Heart left ventricle (tissue), 16 donors: ENCODE measurements at regions of chr10 and their contacts with region 1.

Region 1: DNA sequence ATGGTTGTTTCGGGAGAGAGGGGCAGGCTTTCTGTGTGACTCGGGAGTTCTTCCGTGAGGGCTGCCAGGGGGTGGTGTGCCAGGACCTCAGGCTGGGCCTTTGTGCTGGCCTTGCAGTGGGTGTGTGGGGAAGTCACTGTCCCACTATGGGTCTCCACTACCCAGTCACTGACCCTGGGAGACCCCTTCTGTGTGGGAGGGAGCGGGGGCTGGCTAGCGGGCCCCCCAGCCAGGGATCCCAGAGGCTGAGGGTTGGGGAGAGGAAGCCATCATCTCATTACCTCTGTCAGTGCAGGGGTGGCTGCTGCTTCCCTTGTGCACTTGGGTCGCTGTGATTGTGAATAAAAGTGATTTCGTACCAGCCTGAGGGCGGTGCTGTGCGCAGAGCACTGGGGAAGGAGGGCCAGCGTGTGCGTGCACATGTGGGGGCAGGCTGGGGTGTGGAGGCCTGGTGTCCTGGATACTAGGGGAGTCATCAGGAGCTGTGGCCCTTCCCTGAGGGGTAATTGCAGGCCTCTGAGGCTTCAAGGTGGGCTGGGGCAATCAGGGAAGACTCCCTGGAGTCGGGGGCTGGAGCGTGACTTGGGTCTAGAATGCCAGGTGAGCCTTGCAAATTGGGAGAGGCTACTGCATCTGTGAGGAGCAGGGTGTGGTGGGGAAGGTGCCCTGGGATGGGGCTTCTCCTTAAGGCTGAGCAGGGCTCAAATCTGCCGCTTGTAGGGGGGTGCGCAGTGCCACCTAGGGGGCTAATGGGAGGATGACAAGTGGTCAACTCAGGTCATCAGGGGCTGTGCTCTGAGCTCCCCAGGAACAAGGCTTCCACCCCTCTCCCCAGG is 98.9 kb downstream of the NEURL1 start:
- DNase-seq: no peak
- ATAC-seq: peak in 3 of 4 donors; percentile 42 to 53 (median 50)
- H3K4me3 ChIP-seq: no peak overlapping the region
- H3K27ac ChIP-seq: no peak overlapping the region
- H3K4me1 ChIP-seq: peaks cover 0 to 14% (median 2%) of the 10 kb centered on the region in 12 donors
- H3K27me3 ChIP-seq: no peaks in the 10 kb centered on the region
- CTCF ChIP-seq: peak; percentile 35 to 66 (median 54)
- POLR2A ChIP-seq: no peak

Region 2: DNA sequence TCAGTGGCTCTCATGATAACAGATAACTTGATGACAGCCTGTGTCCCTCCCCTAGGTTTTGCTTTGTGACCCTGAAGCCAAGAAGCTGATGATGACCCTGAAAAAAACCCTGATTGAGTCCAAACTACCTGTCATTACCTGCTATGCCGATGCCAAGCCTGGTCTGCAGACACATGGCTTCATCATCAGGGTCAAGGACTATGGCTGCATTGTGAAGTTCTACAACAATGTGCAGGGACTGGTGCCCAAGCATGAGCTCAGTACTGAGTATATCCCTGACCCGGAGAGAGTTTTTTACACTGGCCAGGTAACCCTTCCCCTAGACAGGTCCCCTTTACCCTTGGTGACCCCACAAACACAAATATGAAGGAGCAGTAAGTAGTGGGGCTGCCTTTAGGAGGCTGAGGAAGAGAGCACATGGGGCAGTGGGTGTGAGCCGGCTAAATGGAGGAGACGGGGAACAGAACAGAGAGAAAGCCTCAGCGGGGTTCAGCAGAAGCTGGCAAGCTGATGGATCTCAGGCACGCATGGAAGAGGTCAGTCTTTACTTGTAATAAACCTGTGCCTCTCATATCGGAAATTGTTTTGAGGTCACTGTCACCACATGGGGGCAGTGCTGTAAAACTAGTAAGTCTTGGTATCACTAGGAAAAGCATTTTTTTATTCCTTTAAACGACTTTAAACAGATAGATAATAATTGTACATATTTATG is 175.8 kb before region 1 on chr10:
- intact Hi-C with region 1: loop called in 7 of 10 experiments (anchors 5 to 10 kb)
- DNase-seq: peak in 3 of 5 donors; percentile 58 to 65 (median 61)
- ATAC-seq: peak in 3 of 4 donors; percentile 18 to 57 (median 28)
- H3K4me3 ChIP-seq: no peak overlapping the region
- H3K27ac ChIP-seq: no peak overlapping the region
- H3K4me1 ChIP-seq: no peaks in the 10 kb centered on the region
- H3K27me3 ChIP-seq: no peaks in the 10 kb centered on the region
- CTCF ChIP-seq: peak; percentile 56 to 86 (median 72)
- POLR2A ChIP-seq: no peak

Region 3: GRCh38 chr10:103870516-103870915 is 278.1 kb after region 1 on chr10:
- intact Hi-C with region 1: loop called in 3 of 10 experiments (anchors 10 kb)
- DNase-seq: no peak
- ATAC-seq: no peak
- H3K4me3 ChIP-seq: no peak overlapping the region
- H3K27ac ChIP-seq: no peak overlapping the region
- H3K4me1 ChIP-seq: peaks cover 0 to 5% (median 0%) of the 10 kb centered on the region in 12 donors
- H3K27me3 ChIP-seq: no peaks in the 10 kb centered on the region
- CTCF ChIP-seq: no peak
- POLR2A ChIP-seq: no peak

Region 4: GRCh38 chr10:105506262-105506661 is 1913.9 kb after region 1 on chr10:
- intact Hi-C with region 1: no loop called
- DNase-seq: no peak
- ATAC-seq: no peak
- H3K4me3 ChIP-seq: no peak overlapping the region
- H3K27ac ChIP-seq: no peak overlapping the region
- H3K4me1 ChIP-seq: no peaks in the 10 kb centered on the region
- H3K27me3 ChIP-seq: no peaks in the 10 kb centered on the region
- CTCF ChIP-seq: no peak
- POLR2A ChIP-seq: no peak